WTC11 (cell line): ENCODE measurements at regions of chr11 and their contacts with region 1.

Region 1: DNA sequence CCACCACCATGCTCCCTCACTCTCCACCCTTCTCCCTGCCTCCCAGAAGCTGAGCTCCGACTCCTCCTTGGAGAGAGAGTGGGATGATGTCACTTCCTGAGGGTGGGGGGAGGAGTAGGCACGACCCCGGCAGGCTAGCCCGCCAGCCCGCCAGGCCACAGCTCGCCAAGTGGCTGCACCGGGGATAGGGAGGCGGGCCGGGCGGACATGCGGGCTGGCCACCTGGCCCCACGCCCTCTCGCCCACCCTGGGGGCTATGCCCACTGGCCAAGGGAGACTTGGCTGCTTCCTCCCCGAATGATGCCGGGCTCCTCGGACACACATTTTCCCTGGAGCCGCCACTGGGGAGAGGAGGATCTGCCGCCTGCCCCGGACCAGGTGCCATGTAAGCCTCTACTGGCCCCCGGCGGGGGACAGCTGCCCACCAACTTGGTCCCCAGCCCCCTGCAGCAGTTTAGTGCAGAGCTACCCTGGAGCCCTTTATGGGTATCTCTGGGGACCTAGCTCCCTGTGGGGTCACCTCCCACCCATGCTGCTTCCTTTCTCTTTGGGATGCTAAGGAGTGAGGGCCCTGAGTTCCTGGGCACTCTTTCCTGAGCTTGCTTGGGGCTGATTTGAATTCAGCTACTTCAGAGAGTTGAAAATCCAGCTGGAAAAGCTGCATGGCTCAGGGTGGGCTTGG is 33.7 kb upstream of the MYRF start:
- DNase-seq: peak; percentile 73
- ATAC-seq: peak; percentile 79
- H3K4me3 Mint-ChIP-seq: peak overlapping the region; percentile 61
- H3K27ac Mint-ChIP-seq: peak overlapping the region; percentile 32; the same call in 1 of the 2 replicates
- H3K4me1 Mint-ChIP-seq: peaks cover 36% of the 10 kb centered on the region
- H3K27me3 Mint-ChIP-seq: peaks cover 3% of the 10 kb centered on the region; the same call in 1 of the 2 replicates
- CTCF ChIP-seq: no peak

Region 2: GRCh38 chr11:61141601-61142028 is 577.1 kb before region 1 on chr11:
- CTCF ChIA-PET with region 1: no interaction called
- POLR2A ChIA-PET with region 1: no interaction called
- DNase-seq: no peak
- ATAC-seq: peak; percentile 72
- H3K4me3 Mint-ChIP-seq: no peak overlapping the region
- H3K27ac Mint-ChIP-seq: no peak overlapping the region
- H3K4me1 Mint-ChIP-seq: peaks cover 20% of the 10 kb centered on the region
- H3K27me3 Mint-ChIP-seq: no peaks in the 10 kb centered on the region
- CTCF ChIP-seq: no peak

Region 3: GRCh38 chr11:61596166-61596938 is 122.4 kb before region 1 on chr11:
- CTCF ChIA-PET with region 1: no interaction called
- POLR2A ChIA-PET with region 1: no interaction called
- DNase-seq: no peak
- ATAC-seq: no peak
- H3K4me3 Mint-ChIP-seq: no peak overlapping the region
- H3K27ac Mint-ChIP-seq: no peak overlapping the region
- H3K4me1 Mint-ChIP-seq: peaks cover 41% of the 10 kb centered on the region
- H3K27me3 Mint-ChIP-seq: peaks cover 5% of the 10 kb centered on the region
- CTCF ChIP-seq: no peak

Region 4: DNA sequence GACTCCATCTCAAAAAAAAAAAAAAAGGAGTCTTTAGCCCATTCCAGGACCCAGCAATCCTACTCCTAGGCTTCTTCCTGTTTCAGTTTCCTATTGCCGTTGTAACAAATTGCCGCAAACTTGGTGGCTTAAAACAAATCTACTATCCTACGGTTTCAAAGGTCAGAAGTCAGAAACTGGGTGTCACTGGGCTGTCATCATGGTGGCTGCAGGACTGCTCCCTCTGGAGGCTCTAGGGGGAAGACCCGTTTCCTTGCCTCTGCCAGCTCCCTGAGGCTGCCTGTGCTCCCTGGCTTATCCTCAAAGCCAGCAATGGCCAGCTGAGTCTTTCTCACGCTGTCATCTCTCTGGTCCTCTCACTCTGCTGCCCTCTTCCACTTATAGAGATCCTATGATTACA is 47.2 kb before region 1 on chr11:
- CTCF ChIA-PET with region 1: interaction called, 16 read pairs
- POLR2A ChIA-PET with region 1: no interaction called
- DNase-seq: peak; percentile 61
- ATAC-seq: peak; percentile 91
- H3K4me3 Mint-ChIP-seq: no peak overlapping the region
- H3K27ac Mint-ChIP-seq: no peak overlapping the region
- H3K4me1 Mint-ChIP-seq: peaks cover 14% of the 10 kb centered on the region
- H3K27me3 Mint-ChIP-seq: no peaks in the 10 kb centered on the region; the same call in 1 of the 2 replicates
- CTCF ChIP-seq: no peak

Region 5: GRCh38 chr11:61688365-61689163 is 30.2 kb before region 1 on chr11:
- CTCF ChIA-PET with region 1: interaction called, 11 read pairs
- POLR2A ChIA-PET with region 1: interaction called, 9 read pairs
- DNase-seq: no peak
- ATAC-seq: no peak
- H3K4me3 Mint-ChIP-seq: no peak overlapping the region
- H3K27ac Mint-ChIP-seq: no peak overlapping the region
- H3K4me1 Mint-ChIP-seq: peaks cover 21% of the 10 kb centered on the region
- H3K27me3 Mint-ChIP-seq: no peaks in the 10 kb centered on the region
- CTCF ChIP-seq: no peak

Region 6: GRCh38 chr11:61947486-61948210 is 228.9 kb after region 1 on chr11:
- CTCF ChIA-PET with region 1: no interaction called
- POLR2A ChIA-PET with region 1: no interaction called
- DNase-seq: peak; percentile 89
- ATAC-seq: peak; percentile 93
- H3K4me3 Mint-ChIP-seq: no peak overlapping the region
- H3K27ac Mint-ChIP-seq: no peak overlapping the region
- H3K4me1 Mint-ChIP-seq: peaks cover 7% of the 10 kb centered on the region
- H3K27me3 Mint-ChIP-seq: peaks cover 3% of the 10 kb centered on the region
- CTCF ChIP-seq: peak; percentile 83

Region 7: DNA sequence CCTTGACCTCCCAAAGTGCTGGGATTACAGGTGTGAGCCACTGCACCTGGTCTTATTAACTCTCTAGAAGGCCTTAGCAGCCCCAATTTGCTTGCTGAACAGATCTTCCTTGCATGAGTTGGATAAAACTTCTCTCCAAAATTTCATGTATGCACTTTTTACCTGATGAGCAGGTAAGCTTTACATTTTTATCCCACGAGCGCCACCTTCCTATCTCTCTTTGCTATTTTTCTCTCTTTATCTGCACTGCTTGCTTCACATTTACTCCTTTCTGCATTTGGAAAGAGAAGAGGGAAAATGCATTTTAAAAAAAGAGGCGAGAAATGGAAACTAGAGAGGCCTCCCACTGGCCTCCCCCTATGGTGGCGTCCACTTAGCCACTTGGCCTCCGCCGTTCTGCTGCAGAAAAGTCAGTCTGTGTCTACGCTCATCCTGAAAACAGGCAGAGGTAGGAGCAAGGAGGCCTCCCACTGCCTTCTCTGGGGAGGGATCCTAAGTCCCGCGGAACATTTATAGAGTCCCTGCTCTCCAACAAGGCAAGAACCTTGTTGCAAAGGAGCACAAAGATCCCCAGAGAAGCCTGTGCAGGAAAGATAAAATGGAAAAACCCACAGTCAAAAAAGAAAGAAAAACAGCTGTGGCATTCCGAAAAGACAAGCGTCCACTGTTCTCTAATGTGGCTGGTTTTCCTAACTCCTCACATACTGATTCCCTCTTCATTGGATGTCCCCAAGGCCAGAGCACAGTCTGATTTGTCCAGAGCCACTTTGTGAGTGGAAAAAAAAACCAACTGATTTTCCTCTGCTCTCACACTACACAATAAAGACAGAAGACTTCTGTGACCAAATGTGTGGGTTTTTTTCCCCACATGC is 342.8 kb after region 1 on chr11:
- CTCF ChIA-PET with region 1: no interaction called
- POLR2A ChIA-PET with region 1: no interaction called
- DNase-seq: no peak
- ATAC-seq: no peak
- H3K4me3 Mint-ChIP-seq: no peak overlapping the region
- H3K27ac Mint-ChIP-seq: peak overlapping the region; percentile 23; the same call in 1 of the 2 replicates
- H3K4me1 Mint-ChIP-seq: 0 out of 2 replicates have a peak, but pooled peaks cover 6% of the 10 kb centered on the region
- H3K27me3 Mint-ChIP-seq: no peaks in the 10 kb centered on the region; the same call in 1 of the 2 replicates
- CTCF ChIP-seq: no peak